Ovary (tissue), 10 donors: ENCODE measurements at regions of chr10 and their contacts with region 1.

Region 1: GRCh38 chr10:67779465-67780203 is 58.4 kb downstream of the DNAJC12 start:
- DNase-seq: peak in 4 of 5 donors; percentile 29 to 69 (median 57)
- H3K4me3 ChIP-seq: no peak overlapping the region
- H3K27ac ChIP-seq: no peak overlapping the region
- H3K4me1 ChIP-seq: no peaks in the 10 kb centered on the region
- H3K27me3 ChIP-seq: no peaks in the 10 kb centered on the region
- CTCF ChIP-seq: peak; percentile 51 to 62 (median 54)
- EP300 ChIP-seq: no peak
- POLR2A ChIP-seq: no peak

Region 2: GRCh38 chr10:67666416-67667034 is 113.1 kb before region 1 on chr10:
- intact Hi-C with region 1: loop called in 3 of 4 experiments (anchors 10 kb)
- DNase-seq: no peak
- H3K4me3 ChIP-seq: no peak overlapping the region
- H3K27ac ChIP-seq: no peak overlapping the region
- H3K4me1 ChIP-seq: no peaks in the 10 kb centered on the region
- H3K27me3 ChIP-seq: no peaks in the 10 kb centered on the region
- CTCF ChIP-seq: no peak
- EP300 ChIP-seq: no peak
- POLR2A ChIP-seq: no peak

Region 3: GRCh38 chr10:67697724-67698131 is 81.9 kb before region 1 on chr10:
- intact Hi-C with region 1: loop called in 2 of 4 experiments (anchors 10 kb)
- DNase-seq: no peak
- H3K4me3 ChIP-seq: no peak overlapping the region
- H3K27ac ChIP-seq: no peak overlapping the region
- H3K4me1 ChIP-seq: peaks cover 2% of the 10 kb centered on the region
- H3K27me3 ChIP-seq: no peaks in the 10 kb centered on the region
- CTCF ChIP-seq: peak in 2 of 3 donors; percentile 13 to 45
- EP300 ChIP-seq: no peak
- POLR2A ChIP-seq: no peak

Region 4: GRCh38 chr10:68212721-68213352 is 433.2 kb after region 1 on chr10:
- intact Hi-C with region 1: no loop called
- DNase-seq: no peak
- H3K4me3 ChIP-seq: no peak overlapping the region
- H3K27ac ChIP-seq: no peak overlapping the region
- H3K4me1 ChIP-seq: no peaks in the 10 kb centered on the region
- H3K27me3 ChIP-seq: no peaks in the 10 kb centered on the region
- CTCF ChIP-seq: peak in 1 of 3 donors; percentile 26
- EP300 ChIP-seq: no peak
- POLR2A ChIP-seq: no peak